ENCODE measurements at regions of chr6 and their contacts with region 1.

Region 1: GRCh38 chr6:155248008-155249001 is 15.5 kb upstream of the CLDN20 start:
- DNase-seq: no peak
- H3K4me3 ChIP-seq: peak overlapping the region in 1 of 2 donors; percentile 23
- H3K27ac ChIP-seq: peak overlapping the region; percentile 30
- H3K4me1 ChIP-seq: peaks cover 8% of the 10 kb centered on the region
- H3K27me3 ChIP-seq: no peaks in the 10 kb centered on the region
- CTCF ChIP-seq: peak; percentile 59 to 85 (median 68)
- POLR2A ChIP-seq: no peak

Region 2: GRCh38 chr6:155174576-155175211 is 73.6 kb before region 1 on chr6:
- intact Hi-C with region 1: loop called (anchors 5 kb)
- DNase-seq: no peak
- H3K4me3 ChIP-seq: no peak overlapping the region
- H3K27ac ChIP-seq: no peak overlapping the region
- H3K4me1 ChIP-seq: peaks cover 15% of the 10 kb centered on the region
- H3K27me3 ChIP-seq: no peaks in the 10 kb centered on the region
- CTCF ChIP-seq: peak; percentile 12 to 62 (median 49)
- POLR2A ChIP-seq: no peak

Region 3: GRCh38 chr6:155201461-155202226 is 46.7 kb before region 1 on chr6:
- intact Hi-C with region 1: no loop called
- DNase-seq: no peak
- H3K4me3 ChIP-seq: no peak overlapping the region
- H3K27ac ChIP-seq: no peak overlapping the region
- H3K4me1 ChIP-seq: peaks cover 18% of the 10 kb centered on the region
- H3K27me3 ChIP-seq: no peaks in the 10 kb centered on the region
- CTCF ChIP-seq: no peak
- POLR2A ChIP-seq: no peak

Region 4: DNA sequence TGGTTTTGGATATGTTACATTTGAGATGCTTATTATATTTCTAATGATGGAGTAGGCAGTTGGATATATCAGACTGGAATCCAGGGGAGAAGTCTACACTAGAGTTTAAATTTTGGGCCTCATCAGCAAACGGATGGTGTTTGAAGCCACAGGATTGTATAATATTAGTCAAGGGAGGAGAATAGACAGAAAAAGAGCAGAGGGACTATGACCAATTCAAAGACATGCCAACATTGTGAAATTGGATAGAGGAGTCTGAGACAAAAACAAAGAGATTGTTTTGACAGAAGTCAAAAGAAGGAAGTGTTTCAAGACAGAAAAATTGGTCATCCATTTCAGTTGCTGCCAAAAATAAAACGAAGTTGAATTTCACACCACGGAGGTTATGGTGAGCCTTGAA is 140.8 kb after region 1 on chr6:
- intact Hi-C with region 1: no loop called
- DNase-seq: no peak
- H3K4me3 ChIP-seq: no peak overlapping the region
- H3K27ac ChIP-seq: no peak overlapping the region
- H3K4me1 ChIP-seq: no peaks in the 10 kb centered on the region
- H3K27me3 ChIP-seq: no peaks in the 10 kb centered on the region
- CTCF ChIP-seq: no peak
- POLR2A ChIP-seq: no peak

Region 5: GRCh38 chr6:155400654-155400965 is 152.3 kb after region 1 on chr6:
- intact Hi-C with region 1: no loop called
- DNase-seq: no peak
- H3K4me3 ChIP-seq: no peak overlapping the region
- H3K27ac ChIP-seq: no peak overlapping the region
- H3K4me1 ChIP-seq: no peaks in the 10 kb centered on the region
- H3K27me3 ChIP-seq: no peaks in the 10 kb centered on the region
- CTCF ChIP-seq: no peak
- POLR2A ChIP-seq: no peak

Measured in vagina (tissue), 2 donors.